Activated CD4-positive, alpha-beta T cell treated with anti-CD3 and anti-CD28 coated beads for 36 hours (primary cell): ENCODE measurements at regions of chr16 and their contacts with region 1.

Region 1: DNA sequence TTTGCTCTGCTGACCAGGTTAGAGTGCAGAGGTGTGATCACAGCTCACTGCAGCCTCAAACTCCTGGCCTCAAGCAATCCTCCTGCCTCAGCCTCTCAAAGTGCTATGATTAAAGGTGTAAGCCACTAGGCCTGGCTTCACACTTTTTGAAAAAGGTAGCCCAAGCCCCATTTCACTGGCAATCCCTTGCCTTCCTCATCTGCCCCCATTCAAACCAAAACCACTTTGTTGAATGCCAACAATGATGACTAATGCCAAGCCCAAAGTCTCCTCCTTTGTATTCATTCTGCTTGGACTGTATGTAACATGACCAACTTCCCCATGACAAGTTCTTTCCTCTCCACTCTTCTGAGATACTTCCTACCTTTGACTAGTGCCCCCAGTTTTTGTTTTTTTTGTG is 33.1 kb downstream of the N4BP1 start:
- DNase-seq: peak; percentile 50
- ATAC-seq: peak; percentile 97
- H3K4me3 Mint-ChIP-seq: no peak overlapping the region
- H3K27ac Mint-ChIP-seq: peak overlapping the region; percentile 78
- H3K4me1 Mint-ChIP-seq: peaks cover 58% of the 10 kb centered on the region
- H3K27me3 Mint-ChIP-seq: no peaks in the 10 kb centered on the region

Region 2: DNA sequence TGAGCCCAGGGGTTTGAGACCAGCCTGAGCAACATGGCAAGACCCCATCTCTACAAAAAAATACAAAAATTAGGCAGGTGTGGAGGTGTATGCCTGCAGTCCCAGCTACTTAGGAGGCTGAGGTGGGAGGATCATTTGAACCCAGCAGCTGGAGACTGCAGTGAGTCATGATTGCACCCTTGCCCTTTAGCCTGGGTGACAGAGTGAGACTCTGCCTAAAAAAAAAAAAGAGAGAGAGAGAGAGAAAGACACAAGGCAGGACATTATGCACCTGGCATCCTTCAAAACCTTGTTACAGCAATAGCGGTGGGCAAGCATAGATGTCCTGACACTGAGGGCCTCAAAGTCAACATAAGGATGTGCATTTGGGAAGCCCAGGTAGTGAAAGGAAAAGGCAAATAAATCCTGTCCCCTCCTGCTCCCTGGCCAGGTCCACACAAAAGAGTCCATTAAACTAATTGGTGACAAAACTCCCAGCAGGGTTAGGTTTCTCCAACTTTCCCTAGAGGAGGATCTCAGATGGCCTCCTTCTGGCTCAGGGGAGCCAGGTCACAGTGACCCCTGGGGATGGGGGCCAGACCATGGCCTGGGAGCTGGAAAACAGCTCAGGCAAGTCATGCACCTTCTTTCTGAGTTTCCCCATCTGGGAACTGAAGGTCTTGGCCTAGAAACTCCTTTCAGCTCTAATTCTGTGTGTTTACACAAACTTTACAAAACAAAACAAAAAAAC is 171.6 kb before region 1 on chr16:
- CTCF ChIA-PET with region 1: no interaction called
- POLR2A ChIA-PET with region 1: no interaction called
- intact Hi-C with region 1: no loop called
- DNase-seq: no peak
- ATAC-seq: no peak
- H3K4me3 Mint-ChIP-seq: no peak overlapping the region
- H3K27ac Mint-ChIP-seq: no peak overlapping the region
- H3K4me1 Mint-ChIP-seq: no peaks in the 10 kb centered on the region
- H3K27me3 Mint-ChIP-seq: no peaks in the 10 kb centered on the region

Region 3: DNA sequence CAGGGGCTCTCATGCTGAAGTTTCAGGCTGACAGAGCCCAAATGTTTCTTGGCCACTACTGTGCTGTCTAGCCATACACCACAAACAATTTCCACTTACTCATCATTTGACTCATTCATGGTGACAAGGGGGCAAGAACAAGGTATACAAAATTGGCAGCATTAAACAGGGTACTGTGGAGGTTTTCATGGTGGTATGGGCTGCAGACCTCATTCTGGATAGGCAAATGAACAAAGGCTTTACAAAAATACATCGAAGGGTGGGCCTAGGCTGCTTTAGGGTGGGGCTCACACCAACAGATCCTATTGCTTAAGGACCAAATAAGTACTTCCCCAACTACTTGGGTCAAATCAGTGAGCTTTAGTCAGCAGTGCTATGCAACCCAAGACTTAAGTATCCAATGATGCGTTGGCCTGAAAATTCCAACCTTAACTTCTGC is 20.0 kb before region 1 on chr16:
- CTCF ChIA-PET with region 1: interaction called, 5 read pairs
- POLR2A ChIA-PET with region 1: no interaction called
- intact Hi-C with region 1: loop called in 1 of 2 experiments (anchors 1 kb)
- DNase-seq: peak; percentile 52
- ATAC-seq: peak; percentile 89
- H3K4me3 Mint-ChIP-seq: no peak overlapping the region
- H3K27ac Mint-ChIP-seq: peak overlapping the region; percentile 64
- H3K4me1 Mint-ChIP-seq: peaks cover 83% of the 10 kb centered on the region
- H3K27me3 Mint-ChIP-seq: no peaks in the 10 kb centered on the region

Region 4: DNA sequence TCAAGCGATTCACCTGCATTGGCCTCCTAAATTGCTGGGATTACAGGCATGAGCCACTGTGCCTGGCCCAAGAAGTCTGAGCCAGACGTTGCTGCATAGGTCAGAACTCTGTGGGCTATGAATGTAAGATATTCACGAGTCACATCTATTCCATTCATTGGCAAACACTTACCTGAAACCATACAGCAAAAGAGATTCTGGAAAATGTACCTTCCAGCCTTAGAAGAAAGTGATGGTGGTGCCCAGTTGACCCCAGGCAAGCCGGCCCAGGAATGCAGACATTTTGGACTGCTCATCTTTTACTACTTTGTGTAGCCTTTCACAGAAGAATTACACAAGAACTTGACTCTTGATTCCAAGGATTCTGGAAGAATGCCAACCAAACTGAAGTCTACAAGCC is 168.6 kb after region 1 on chr16:
- CTCF ChIA-PET with region 1: no interaction called
- POLR2A ChIA-PET with region 1: no interaction called
- intact Hi-C with region 1: loop called in 1 of 2 experiments (anchors 5 kb)
- DNase-seq: no peak
- ATAC-seq: no peak
- H3K4me3 Mint-ChIP-seq: no peak overlapping the region
- H3K27ac Mint-ChIP-seq: no peak overlapping the region
- H3K4me1 Mint-ChIP-seq: no peaks in the 10 kb centered on the region
- H3K27me3 Mint-ChIP-seq: peaks cover 4% of the 10 kb centered on the region